ENCODE measurements at regions of chr22 and their contacts with region 1.

Region 1: DNA sequence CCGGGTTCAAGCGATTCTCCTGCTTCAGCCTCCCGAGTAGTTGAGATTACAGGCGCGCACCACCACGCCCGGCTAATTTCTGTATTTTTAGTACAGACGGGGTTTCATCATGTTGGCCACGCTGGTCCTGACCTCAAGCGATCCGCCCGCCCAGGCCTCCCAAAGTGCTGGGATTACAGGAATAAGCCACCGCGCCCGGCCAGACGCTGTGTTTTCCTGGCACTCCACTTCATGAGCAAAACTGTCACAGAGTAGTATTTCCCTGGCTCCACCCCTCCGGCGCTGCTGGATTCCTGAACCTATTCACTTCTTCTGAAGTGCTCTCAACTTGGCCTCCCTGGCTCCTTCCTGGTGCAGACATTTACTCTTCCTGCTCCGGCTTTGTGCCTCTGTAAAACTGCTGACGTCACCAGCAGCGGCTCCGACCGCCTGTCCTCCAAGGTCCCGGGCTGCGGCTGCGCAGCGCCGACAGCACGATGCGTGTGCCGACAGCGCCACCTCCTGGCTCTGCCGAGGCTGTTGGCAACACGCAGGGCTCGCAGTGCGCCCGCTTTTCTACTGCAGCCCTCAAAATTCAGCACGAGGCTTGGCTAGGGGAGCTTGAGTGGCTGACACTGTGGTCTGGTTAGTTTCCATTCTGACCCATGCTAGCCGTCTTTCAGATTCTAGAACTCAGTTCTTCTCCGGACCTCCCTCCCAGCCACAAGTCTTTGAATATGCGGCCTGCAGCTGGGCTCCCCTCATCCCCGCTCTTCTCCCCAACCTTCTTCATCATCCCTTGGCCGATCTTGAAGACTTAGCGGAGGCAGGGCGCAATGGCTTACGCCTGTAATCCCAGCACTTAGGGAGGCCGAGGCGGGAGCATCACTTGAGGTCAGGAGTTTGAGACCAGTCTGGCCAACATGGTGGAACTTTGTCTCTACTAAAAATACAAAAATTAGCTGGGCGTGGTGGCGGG is 36.6 kb downstream of the APOL3 start:
- ATAC-seq: peak; percentile 94 to 99 (median 98)
- H3K4me3 ChIP-seq: no peak overlapping the region
- H3K27ac ChIP-seq: no peak overlapping the region
- H3K4me1 ChIP-seq: peaks cover 0 to 3% of the 10 kb centered on the region in 2 donors

Region 2: DNA sequence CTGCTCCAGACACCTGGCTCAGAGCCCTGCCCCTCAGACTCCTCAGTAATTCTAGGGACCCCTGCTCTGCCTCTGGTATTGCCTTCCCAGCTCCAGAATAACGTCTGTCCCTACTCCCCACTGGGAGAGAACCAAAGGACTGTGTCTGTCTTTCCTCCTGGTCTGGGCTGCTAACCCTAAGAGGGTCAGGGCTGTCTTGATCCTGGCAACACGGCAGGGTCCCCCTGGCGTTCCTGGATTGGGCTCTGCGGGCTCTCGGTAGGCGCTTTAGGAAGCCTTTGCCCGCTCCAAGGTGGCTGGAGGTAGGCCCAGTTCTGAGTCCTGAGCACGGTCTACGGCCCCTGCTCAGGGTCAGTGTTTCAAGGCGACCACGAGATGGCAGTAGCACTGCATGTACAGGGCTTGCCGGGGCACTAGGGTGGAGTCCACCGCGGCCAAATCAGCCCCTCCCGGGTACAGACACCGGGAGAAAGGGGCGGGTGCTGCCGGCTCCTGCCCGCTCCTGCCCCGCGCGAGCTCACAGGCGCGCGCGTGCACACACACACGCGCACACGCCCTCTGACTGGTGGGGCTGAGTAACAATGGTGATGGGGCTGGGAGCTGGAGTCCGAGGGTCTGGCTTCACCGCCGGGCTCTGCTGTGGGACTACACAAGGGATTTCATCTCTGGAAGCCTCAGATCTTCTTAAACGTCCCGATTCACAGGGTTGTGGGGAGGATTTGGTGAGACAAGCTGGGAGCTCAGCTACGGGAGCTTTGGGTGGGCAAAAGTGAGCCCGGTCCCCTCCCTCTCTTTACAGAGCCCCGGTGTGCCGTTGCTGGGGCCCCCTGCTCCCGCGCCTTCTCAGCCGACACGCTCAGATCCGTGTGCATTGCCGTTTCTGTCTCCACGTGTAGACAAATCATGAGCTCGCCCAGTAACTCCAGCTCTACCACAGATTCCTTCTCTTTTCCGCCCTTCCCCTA is 773.1 kb before region 1 on chr22:
- in situ Hi-C with region 1: loop called in 1 of 9 experiments (anchors 25 kb)
- ATAC-seq: peak; percentile 83 to 94 (median 92)
- H3K4me3 ChIP-seq: peak overlapping the region; percentile 23 to 47 (median 31)
- H3K27ac ChIP-seq: peak overlapping the region; percentile 1 to 56
- H3K4me1 ChIP-seq: peaks cover 9 to 20% of the 10 kb centered on the region in 2 donors

Region 3: GRCh38 chr22:35430897-35431322 is 693.0 kb before region 1 on chr22:
- in situ Hi-C with region 1: loop called in 1 of 9 experiments (anchors 25 kb)
- ATAC-seq: peak; percentile 86 to 98 (median 96)
- H3K4me3 ChIP-seq: no peak overlapping the region
- H3K27ac ChIP-seq: no peak overlapping the region
- H3K4me1 ChIP-seq: peaks cover 0 to 9% of the 10 kb centered on the region in 2 donors

Region 4: GRCh38 chr22:35627264-35628041 is 496.5 kb before region 1 on chr22:
- in situ Hi-C with region 1: loop called in 1 of 9 experiments (anchors 25 kb)
- ATAC-seq: peak; percentile 73 to 83 (median 77)
- H3K4me3 ChIP-seq: peak overlapping the region in 2 of 5 donors; percentile 6 to 14
- H3K27ac ChIP-seq: no peak overlapping the region
- H3K4me1 ChIP-seq: peaks cover 0 to 15% of the 10 kb centered on the region in 2 donors

Region 5: GRCh38 chr22:35868938-35869337 is 255.0 kb before region 1 on chr22:
- in situ Hi-C with region 1: no loop called
- ATAC-seq: peak in 1 of 8 experiments; percentile 24
- H3K4me3 ChIP-seq: no peak overlapping the region
- H3K27ac ChIP-seq: no peak overlapping the region
- H3K4me1 ChIP-seq: peaks cover 0 to 2% of the 10 kb centered on the region in 2 donors

Region 6: DNA sequence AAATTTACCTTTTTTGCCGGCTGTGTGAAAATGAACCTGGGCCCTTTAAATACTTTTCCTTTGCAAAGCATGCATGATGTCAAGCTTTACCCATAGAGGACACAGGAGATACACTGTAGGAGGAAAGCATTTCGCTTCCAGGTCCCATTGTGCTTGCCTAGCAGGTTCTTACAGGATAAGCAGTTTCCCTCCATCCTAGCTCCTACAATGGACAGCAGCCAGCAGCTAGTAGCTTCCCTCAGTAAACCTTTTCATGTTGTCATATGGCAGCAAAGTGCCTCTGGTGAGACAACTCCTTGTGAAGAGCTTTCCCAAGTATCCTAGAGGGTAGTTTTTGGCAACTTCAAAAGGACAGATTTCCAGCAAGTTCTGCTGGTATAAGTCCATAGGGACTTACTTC is 173.7 kb before region 1 on chr22:
- in situ Hi-C with region 1: loop called in 1 of 9 experiments (anchors 10 kb)
- ATAC-seq: no peak
- H3K4me3 ChIP-seq: no peak overlapping the region
- H3K27ac ChIP-seq: no peak overlapping the region
- H3K4me1 ChIP-seq: no peaks in the 10 kb centered on the region

Region 7: DNA sequence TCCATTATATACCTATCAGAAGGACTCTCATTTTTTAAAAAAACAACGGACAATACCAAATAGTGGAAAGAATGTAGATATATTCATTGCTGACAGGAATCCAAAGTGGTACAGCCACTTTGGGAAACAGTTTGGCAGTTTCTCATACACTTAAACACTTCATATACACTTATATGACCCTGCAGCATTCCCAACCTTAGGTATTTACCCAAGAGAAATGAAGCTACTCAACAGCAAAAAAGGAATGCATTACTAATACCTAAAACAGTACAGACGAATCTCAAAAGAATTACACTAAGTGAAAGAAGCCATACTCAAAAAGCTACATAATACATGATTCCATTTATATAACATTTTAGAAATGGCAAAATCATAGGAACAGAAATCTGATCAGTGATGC is 146.8 kb before region 1 on chr22:
- in situ Hi-C with region 1: no loop called
- ATAC-seq: no peak
- H3K4me3 ChIP-seq: no peak overlapping the region
- H3K27ac ChIP-seq: no peak overlapping the region
- H3K4me1 ChIP-seq: peaks cover 2 to 5% of the 10 kb centered on the region in 2 donors

Measured in motor neuron (in vitro differentiated cells).